PC-3 (cell line): ENCODE measurements at regions of chr15 and their contacts with region 1.

Region 1: GRCh38 chr15:41161336-41161735 is 45.3 kb upstream of the INO80 start:
- DNase-seq: peak; percentile 36
- ATAC-seq: no peak
- H3K4me3 ChIP-seq: no peak overlapping the region
- H3K27ac ChIP-seq: peak overlapping the region; percentile 21
- H3K4me1 ChIP-seq: peaks cover 18% of the 10 kb centered on the region
- H3K27me3 ChIP-seq: no peaks in the 10 kb centered on the region
- CTCF ChIP-seq: no peak

Region 2: DNA sequence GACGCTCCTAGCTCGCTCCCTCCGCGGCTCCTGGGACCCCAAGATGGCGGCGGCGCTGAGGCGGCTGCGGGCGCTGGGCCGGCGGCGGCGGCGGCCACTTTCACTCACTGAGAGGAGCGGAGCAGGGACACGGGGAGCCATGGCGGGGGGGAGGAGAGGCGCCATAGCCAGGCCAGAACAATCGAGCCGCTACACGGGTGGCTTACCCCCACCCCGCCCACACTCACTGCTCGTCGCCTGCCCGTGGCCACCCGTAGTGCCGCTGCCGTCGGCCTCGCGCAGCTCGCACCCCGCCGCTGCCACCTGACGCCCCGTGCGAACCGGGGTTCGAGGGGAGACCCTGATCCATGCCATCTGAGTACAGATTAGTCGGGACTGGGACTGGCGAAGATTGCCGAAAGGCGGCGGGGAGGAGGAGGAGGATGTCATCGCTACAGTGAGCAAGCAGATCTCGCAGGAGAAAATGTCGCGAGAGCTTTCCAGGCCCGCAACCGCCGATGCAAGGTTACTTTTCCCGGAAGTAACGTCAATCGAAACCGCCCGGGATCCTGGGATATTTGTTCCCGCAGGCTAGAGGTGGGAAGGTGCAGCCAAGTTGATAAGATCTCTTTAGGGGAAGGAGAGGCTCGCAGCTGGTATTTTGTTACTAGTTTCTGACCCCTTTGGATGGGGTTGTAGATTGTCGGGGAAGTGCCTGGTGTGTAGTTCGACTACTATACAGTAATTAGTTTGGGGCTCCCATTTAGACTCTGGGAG is 45.0 kb before region 1 on chr15 and contains the start of gene INO80:
- CTCF ChIA-PET with region 1: no interaction called
- POLR2A ChIA-PET with region 1: no interaction called
- intact Hi-C with region 1: loop called (anchors 5 kb)
- DNase-seq: peak; percentile 99
- ATAC-seq: peak; percentile 88
- H3K4me3 ChIP-seq: peak within 1 kb of the TSS; percentile 89
- H3K27ac ChIP-seq: peak within 1 kb of the TSS; percentile 93
- H3K4me1 ChIP-seq: peaks cover 11% of the 10 kb centered on the region
- H3K27me3 ChIP-seq: no peaks in the 10 kb centered on the region
- CTCF ChIP-seq: no peak
- total RNA-seq, gene INO80: 38.4 and 47.7 TPM in 2 replicates

Region 3: GRCh38 chr15:41377978-41378377 is 216.6 kb after region 1 on chr15:
- CTCF ChIA-PET with region 1: no interaction called
- POLR2A ChIA-PET with region 1: no interaction called
- intact Hi-C with region 1: no loop called
- DNase-seq: peak; percentile 40
- ATAC-seq: peak; percentile 61
- H3K4me3 ChIP-seq: no peak overlapping the region
- H3K27ac ChIP-seq: no peak overlapping the region
- H3K4me1 ChIP-seq: no peaks in the 10 kb centered on the region
- H3K27me3 ChIP-seq: no peaks in the 10 kb centered on the region
- CTCF ChIP-seq: no peak